ENCODE measurements at regions of chr9 and their contacts with region 1.

Region 1: GRCh38 chr9:70602321-70603019 is 188.0 kb upstream of the KLF9 start:
- DNase-seq: peak; percentile 85
- H3K4me3 Mint-ChIP-seq: no peak overlapping the region
- H3K27ac Mint-ChIP-seq: no peak overlapping the region
- H3K4me1 Mint-ChIP-seq: peaks cover 5% of the 10 kb centered on the region
- H3K27me3 Mint-ChIP-seq: no peaks in the 10 kb centered on the region

Region 2: DNA sequence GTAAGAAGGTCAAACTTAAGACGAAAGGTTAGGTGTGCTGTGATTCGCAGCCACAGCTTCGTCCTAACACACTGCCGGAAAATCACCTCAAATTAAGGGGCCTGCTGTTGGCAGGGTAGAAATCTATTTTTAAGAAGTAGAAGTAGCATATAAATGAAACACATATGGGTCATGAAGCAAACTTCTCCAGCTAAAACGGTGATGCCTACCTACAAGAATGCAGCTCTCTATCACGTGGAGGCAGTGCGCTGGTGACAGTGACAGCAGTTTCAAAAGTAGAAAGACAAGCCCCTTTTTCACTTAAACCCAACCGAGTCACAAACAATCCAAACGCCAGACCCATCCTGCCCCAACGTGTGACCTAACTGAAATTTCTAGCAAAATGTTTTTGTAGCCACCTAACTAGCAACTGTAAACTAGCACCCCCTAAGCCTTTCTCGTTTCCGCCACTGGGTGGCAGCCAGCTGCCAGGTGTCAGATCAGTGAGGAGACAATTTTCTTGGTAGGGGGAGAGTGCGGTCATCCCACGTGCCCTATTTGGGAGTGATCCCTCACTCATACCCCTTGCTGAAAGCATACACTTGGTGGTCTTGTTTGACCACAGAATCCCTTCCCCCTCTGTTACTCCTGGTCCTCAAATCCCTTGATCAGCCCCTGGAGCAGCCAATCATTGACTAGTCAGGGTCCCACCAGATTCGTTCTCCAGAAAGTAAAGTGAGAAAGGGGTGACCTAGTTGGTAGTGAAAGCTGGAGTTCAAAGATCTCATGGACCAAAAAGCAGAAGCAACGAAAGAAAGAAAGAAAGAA is 630.6 kb before region 1 on chr9:
- intact Hi-C with region 1: loop called (anchors 1 kb)
- DNase-seq: peak; percentile 82
- H3K4me3 Mint-ChIP-seq: no peak overlapping the region
- H3K27ac Mint-ChIP-seq: no peak overlapping the region
- H3K4me1 Mint-ChIP-seq: no peaks in the 10 kb centered on the region
- H3K27me3 Mint-ChIP-seq: peaks cover 4% of the 10 kb centered on the region

Region 3: DNA sequence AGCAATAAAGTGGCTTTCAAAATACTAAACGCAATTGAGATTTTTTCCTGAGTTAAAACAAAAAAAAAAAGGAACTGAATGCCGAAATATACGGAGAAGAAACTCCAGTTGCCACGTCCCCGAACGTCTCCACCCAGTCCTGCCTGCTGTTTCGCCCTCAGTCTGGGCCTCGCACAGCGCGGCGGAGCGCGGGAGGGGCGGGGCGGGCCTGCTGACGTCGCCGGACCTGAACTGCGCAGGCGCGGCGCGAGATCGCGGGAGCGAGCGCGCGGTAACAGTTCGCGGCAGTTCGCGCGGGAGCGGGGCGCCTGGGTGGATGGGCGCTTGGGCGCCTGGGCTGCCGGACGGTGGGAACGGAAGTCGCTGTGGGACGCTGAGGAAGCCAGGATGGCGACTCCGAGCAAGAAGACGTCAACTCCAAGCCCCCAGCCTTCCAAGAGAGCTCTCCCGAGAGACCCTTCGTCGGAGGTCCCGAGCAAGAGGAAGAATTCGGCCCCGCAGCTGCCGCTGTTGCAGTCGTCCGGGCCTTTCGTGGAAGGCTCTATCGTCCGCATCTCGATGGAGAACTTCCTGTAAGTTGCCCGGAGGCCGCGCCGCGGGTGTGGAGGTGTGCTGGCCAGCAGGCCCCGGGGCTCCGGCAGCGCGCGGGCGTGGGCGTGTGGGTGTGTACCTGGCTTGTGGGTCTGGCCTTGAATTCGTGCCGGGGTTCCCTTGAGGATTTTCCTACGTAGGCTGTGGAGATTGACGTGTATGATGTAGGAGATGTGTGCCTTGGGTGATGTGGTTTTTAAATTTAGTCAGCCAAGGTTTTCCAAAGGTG is 343.6 kb before region 1 on chr9 and contains the start of gene SMC5:
- intact Hi-C with region 1: loop called (anchors 10 kb)
- DNase-seq: peak; percentile 98
- H3K4me3 Mint-ChIP-seq: peak within 1 kb of the TSS; percentile 91
- H3K27ac Mint-ChIP-seq: peak within 1 kb of the TSS; percentile 85
- H3K4me1 Mint-ChIP-seq: peaks cover 49% of the 10 kb centered on the region
- H3K27me3 Mint-ChIP-seq: peaks cover 11% of the 10 kb centered on the region
- total RNA-seq, gene SMC5: 47.0 and 50.7 TPM in 2 replicates

Region 4: DNA sequence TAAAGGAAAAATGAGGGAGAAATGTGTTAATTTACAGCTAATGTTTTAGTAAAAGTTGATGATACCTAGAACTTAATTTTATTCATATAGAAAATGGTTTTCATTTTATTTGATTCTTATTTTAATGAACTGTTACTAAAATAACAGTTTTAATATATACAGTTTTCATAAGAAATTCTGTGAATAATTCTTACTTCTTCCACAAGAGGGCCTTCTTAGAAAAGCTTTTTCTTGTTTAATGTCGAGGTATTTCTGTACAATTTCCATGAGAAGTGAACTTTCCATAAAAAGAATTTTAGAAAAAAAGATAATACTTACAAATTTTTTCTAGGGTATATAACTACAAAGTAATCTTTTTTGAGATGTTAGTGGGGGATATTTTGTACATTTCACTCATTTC is 261.9 kb before region 1 on chr9:
- intact Hi-C with region 1: loop called (anchors 1 kb)
- DNase-seq: no peak
- H3K4me3 Mint-ChIP-seq: no peak overlapping the region
- H3K27ac Mint-ChIP-seq: no peak overlapping the region
- H3K4me1 Mint-ChIP-seq: peaks cover 4% of the 10 kb centered on the region
- H3K27me3 Mint-ChIP-seq: no peaks in the 10 kb centered on the region

Region 5: GRCh38 chr9:70525519-70525918 is 77.0 kb before region 1 on chr9:
- intact Hi-C with region 1: loop called (anchors 1 kb)
- DNase-seq: no peak
- H3K4me3 Mint-ChIP-seq: no peak overlapping the region
- H3K27ac Mint-ChIP-seq: no peak overlapping the region
- H3K4me1 Mint-ChIP-seq: peaks cover 24% of the 10 kb centered on the region
- H3K27me3 Mint-ChIP-seq: no peaks in the 10 kb centered on the region

Measured in activated CD4-positive, alpha-beta T cell treated with anti-CD3 and anti-CD28 coated beads, Interleukin-2, amount 10 ng/mL, durations not matched to agents 24 days and 14 days (primary cell).